Mammary epithelial cell (primary cell): ENCODE measurements at regions of chr5 and their contacts with region 1.

Region 1: DNA sequence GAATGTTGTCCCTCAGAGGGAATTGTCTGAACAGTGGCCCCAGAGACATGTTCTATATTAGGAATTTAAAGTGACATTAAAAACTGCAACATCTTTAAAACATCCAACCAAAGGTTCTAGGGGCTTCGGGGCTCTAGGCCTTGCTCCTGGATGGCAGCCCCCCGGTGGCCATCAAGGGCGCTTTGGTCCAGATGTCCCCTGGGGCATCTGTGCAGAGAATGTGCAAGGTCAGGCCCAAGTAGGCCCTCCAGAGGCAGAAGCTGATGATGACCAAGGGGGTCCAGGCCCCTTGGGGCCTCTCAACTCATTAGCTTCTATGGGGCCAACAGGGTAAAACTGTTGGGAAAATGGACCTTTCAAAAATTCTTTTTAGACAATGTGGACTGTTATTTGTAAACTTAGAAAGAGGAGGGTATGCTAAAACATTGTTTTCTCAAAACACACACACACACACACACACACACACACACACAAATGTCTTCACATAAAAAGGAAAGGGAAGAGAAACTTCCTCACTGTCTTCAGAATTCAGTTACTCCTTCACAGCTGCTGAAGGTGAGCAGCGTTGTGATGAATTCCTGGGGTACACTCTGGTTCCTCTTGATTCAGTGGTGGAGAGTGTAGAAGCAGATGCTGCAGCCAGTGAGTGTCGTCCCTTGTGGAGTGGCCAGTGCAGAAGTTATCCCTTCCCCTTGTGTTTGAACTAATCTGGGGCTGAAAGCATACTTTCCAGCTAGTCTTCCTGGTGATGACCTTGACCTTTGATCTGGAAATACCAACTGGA is 125.2 kb downstream of the WDR41 start:
- DNase-seq: no peak
- H3K4me3 ChIP-seq: no peak overlapping the region
- H3K27ac ChIP-seq: no peak overlapping the region
- H3K4me1 ChIP-seq: no peaks in the 10 kb centered on the region
- H3K27me3 ChIP-seq: peaks cover 1% of the 10 kb centered on the region
- CTCF ChIP-seq: no peak

Region 2: DNA sequence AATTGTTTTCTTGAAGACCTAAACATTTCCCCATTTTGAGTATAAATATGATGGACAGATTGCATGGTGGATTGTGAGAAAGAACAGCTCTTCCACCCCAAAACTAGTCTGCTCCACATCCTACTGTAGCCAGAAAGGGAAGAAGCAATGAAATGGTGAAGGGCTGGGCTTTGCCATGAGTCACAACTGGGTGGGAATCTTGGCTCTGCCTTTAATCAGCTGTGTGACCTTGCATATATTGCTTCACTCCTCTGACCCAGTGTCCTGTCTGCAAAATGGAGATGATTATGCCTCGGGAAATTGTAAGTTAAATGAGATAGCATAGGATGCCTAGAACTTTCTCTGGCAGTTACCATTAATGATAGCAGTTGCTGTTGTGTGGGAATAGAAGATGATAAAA is 54.5 kb before region 1 on chr5:
- CTCF ChIA-PET with region 1: no interaction called
- dilution Hi-C with region 1: no loop called
- in situ Hi-C with region 1: no loop called
- intact Hi-C with region 1: no loop called
- DNase-seq: peak; percentile 28
- H3K4me3 ChIP-seq: no peak overlapping the region
- H3K27ac ChIP-seq: no peak overlapping the region
- H3K4me1 ChIP-seq: no peaks in the 10 kb centered on the region
- H3K27me3 ChIP-seq: peaks cover 2% of the 10 kb centered on the region
- CTCF ChIP-seq: no peak

Region 3: DNA sequence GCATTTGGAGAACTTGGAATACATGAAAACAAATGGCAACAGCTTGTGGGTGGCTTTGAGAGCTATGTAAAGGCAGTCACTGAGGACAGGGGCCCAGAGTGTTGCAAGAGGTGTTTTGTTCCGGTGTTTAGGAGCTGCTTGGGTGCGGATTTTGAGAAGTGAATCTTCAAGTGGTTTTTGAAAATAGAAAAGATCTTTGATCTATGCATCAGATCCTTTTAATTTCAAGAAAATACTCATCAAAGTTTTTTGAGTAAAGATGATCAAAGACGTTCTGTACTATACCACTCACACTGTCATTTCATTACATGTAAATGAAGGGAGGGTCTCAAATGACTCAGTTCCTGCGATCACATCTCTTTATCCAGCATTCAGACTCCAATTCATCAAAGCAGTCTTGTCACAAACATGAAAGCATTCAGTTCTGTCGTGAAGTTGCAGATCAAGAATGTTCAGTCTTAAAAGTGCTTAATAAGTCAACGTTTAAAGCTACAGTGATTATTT is 12.7 kb after region 1 on chr5:
- CTCF ChIA-PET with region 1: no interaction called
- dilution Hi-C with region 1: no loop called
- in situ Hi-C with region 1: no loop called
- intact Hi-C with region 1: no loop called
- DNase-seq: no peak
- H3K4me3 ChIP-seq: no peak overlapping the region
- H3K27ac ChIP-seq: no peak overlapping the region
- H3K4me1 ChIP-seq: no peaks in the 10 kb centered on the region
- H3K27me3 ChIP-seq: peaks cover 1% of the 10 kb centered on the region
- CTCF ChIP-seq: no peak

Region 4: GRCh38 chr5:77569409-77569808 is 202.5 kb after region 1 on chr5:
- CTCF ChIA-PET with region 1: interaction called, 19 read pairs
- dilution Hi-C with region 1: no loop called
- in situ Hi-C with region 1: no loop called
- intact Hi-C with region 1: no loop called
- DNase-seq: no peak
- H3K4me3 ChIP-seq: no peak overlapping the region
- H3K27ac ChIP-seq: no peak overlapping the region
- H3K4me1 ChIP-seq: no peaks in the 10 kb centered on the region
- H3K27me3 ChIP-seq: peaks cover 6% of the 10 kb centered on the region
- CTCF ChIP-seq: no peak

Region 5: GRCh38 chr5:77645158-77645994 is 278.5 kb after region 1 on chr5:
- CTCF ChIA-PET with region 1: no interaction called
- dilution Hi-C with region 1: no loop called
- in situ Hi-C with region 1: no loop called
- intact Hi-C with region 1: no loop called
- DNase-seq: no peak
- H3K4me3 ChIP-seq: no peak overlapping the region
- H3K27ac ChIP-seq: no peak overlapping the region
- H3K4me1 ChIP-seq: no peaks in the 10 kb centered on the region
- H3K27me3 ChIP-seq: peaks cover 62% of the 10 kb centered on the region
- CTCF ChIP-seq: peak in 1 of 2 donors; percentile 3